ENCODE measurements at regions of chr6 and their contacts with region 1.

Region 1: DNA sequence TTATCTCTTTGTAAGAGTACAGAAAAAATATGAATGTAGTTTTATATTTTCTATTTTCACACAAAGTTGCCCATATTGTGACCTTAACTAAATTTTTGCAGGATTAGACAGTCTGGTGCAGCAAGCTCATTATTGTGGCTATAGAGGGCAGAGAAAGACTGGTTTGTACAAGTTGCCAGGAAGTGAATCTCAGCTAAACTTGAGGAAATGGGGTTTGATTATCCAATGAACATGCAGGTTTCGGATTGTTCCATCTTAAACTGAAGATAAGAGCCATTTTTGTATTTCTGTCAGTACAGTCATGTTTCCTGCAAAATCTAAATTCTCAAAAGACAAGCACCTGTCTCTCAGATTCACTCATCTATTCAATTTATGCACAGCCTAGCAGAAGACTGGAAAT is 390.9 kb downstream of the MMUT start:
- DNase-seq: peak; percentile 66
- H3K4me3 ChIP-seq: no peak overlapping the region
- H3K27ac ChIP-seq: peak overlapping the region; percentile 95
- H3K4me1 ChIP-seq: peaks cover 5% of the 10 kb centered on the region
- H3K27me3 ChIP-seq: no peaks in the 10 kb centered on the region
- CTCF ChIP-seq: no peak; the same call in 1 of the 2 replicates

Region 2: GRCh38 chr6:49409951-49410542 is 337.9 kb after region 1 on chr6:
- CTCF ChIA-PET with region 1: interaction called, 16 read pairs
- POLR2A ChIA-PET with region 1: no interaction called
- intact Hi-C with region 1: loop called (anchors 1 kb)
- DNase-seq: peak; percentile 84
- H3K4me3 ChIP-seq: peak overlapping the region; percentile 14
- H3K27ac ChIP-seq: peak overlapping the region; percentile 57
- H3K4me1 ChIP-seq: peaks cover 6% of the 10 kb centered on the region
- H3K27me3 ChIP-seq: no peaks in the 10 kb centered on the region
- CTCF ChIP-seq: peak; percentile 89

Region 3: DNA sequence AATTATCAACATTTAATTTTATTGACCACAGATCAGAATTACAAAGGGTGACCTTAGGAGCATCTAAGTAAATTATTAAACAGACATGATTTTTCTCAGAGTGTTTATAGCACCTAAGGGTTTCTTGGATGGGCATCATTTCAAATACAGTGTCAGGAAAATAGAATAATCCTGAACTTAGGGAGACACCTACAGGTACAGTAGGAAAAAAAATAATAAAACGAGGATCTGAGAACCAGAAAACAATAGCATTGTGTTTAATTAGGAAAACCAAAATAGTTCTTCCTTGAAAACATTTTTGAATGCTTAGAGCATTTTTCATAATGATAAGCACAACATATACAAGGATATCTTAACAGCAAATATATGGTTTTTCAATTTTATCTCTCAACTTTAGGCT is 351.7 kb after region 1 on chr6:
- CTCF ChIA-PET with region 1: no interaction called
- POLR2A ChIA-PET with region 1: no interaction called
- intact Hi-C with region 1: loop called (anchors 1 kb)
- DNase-seq: peak; percentile 30
- H3K4me3 ChIP-seq: no peak overlapping the region
- H3K27ac ChIP-seq: no peak overlapping the region
- H3K4me1 ChIP-seq: no peaks in the 10 kb centered on the region
- H3K27me3 ChIP-seq: no peaks in the 10 kb centered on the region
- CTCF ChIP-seq: peak; percentile 49

Measured in A673 (cell line).